ENCODE measurements at regions of chr3 and their contacts with region 1.

Region 1: DNA sequence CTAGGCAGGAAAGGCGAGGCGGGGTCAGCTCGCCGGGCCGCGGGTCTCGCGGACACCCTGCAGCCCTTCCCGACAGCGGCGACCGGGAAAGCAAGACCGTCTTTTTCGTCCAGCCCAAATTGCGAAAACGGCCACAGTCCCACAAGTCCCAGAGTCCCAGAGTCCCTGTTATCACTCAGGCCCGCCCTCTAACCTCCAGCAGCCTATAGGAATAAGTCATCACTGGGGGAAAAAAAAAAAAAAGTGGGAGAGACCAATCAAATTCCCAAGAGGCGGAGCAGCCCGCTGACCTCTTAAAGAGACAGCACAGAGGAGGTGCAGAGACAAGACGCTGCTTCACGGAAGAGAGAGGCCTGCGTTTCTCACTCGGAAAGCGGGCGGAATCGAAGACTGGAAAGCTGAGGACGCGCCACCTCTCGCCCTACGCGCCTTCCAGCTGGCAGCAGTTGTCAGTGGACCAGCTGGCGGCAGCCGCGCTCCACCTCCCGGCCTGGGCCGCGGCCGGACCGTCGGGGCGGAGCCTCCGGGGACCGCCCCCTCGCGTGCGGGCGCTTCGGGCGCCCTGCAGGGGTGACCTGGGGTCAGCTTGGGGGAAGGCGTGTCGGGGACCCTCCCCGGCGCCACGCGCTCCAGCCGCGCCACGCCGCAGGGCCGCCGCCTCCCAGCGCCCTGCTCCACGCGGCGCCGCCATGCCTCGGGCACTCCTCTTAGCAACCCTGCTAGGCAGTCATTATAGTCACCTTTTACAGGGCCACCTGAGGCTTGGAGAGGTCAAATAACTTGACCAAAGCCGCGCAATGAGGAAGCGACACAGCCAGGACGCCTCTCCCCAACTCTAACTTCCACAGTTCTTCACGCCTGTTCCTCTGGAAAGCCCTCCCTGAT is at the start of gene TPRA1:
- DNase-seq: peak; percentile 88
- ATAC-seq: peak; percentile 86
- H3K4me3 Mint-ChIP-seq: peak within 1 kb of the TSS; percentile 84
- H3K27ac Mint-ChIP-seq: peak within 1 kb of the TSS; percentile 96
- H3K4me1 Mint-ChIP-seq: peaks cover 25% of the 10 kb centered on the region
- H3K27me3 Mint-ChIP-seq: no peaks in the 10 kb centered on the region
- total RNA-seq, gene TPRA1: 22.5 to 24.8 TPM

Region 2: GRCh38 chr3:126703512-126704462 is 887.0 kb before region 1 on chr3 and contains the start of gene CHCHD6:
- CTCF ChIA-PET with region 1: no interaction called
- POLR2A ChIA-PET with region 1: no interaction called
- intact Hi-C with region 1: loop called in 1 of 2 experiments (anchors 2 kb)
- DNase-seq: peak; percentile 98
- ATAC-seq: peak; percentile 99
- H3K4me3 Mint-ChIP-seq: peak within 1 kb of the TSS; percentile 92
- H3K27ac Mint-ChIP-seq: peak within 1 kb of the TSS; percentile 82
- H3K4me1 Mint-ChIP-seq: peaks cover 23% of the 10 kb centered on the region
- H3K27me3 Mint-ChIP-seq: peaks cover 9% of the 10 kb centered on the region
- total RNA-seq, gene CHCHD6: 17.1 to 17.7 TPM

Region 3: DNA sequence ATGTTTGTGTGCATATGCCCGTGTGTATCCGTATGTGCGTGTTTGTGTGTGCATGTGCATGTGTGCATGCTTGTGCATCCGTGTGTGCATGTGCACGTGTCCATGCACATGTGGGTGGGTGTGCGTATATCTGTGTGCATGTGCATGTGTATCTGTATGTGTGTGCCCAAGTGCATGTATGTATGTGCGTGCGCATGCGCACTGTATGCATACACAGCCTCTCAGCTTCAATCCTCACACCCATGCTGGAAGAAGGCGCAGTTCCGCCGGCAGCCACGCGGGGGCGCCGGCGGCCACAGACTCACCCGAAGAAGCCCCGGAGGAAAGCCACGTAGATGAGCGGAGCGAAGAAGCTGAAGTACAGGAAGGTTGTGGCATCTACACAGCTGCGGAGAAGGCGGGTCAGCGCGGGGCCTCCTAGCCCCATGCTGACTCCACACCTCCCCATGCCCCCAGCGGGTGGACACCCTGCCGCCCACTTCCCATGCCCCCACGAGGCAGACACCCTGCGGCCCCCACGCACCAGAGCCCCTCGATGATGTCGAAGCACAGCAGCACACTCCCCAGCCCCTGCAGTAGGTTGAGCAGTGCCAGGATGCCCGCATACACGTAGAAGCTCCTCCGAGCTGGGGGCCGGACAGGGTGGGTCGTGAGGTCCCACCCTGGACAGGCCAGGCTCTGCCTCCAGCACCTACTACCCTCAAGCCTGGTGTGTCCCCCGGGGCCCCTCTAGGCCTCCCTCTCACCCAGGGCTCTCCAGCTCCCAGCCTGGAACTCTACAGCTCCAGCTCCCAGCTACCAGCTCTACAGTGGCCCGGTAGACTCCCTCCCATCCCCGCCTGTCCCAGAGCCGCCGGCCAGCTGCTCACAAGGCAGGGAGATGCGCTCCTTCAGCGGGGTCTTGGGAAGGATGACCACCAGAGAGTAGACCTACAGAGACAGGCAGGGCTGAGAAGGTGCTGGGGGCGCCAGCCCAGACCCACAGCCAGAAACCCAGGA is 15.7 kb before region 1 on chr3:
- CTCF ChIA-PET with region 1: interaction called, 10 read pairs
- POLR2A ChIA-PET with region 1: interaction called, 4 read pairs
- intact Hi-C with region 1: loop called (anchors 1 kb)
- DNase-seq: peak; percentile 90
- ATAC-seq: peak; percentile 97
- H3K4me3 Mint-ChIP-seq: no peak overlapping the region
- H3K27ac Mint-ChIP-seq: peak overlapping the region; percentile 34
- H3K4me1 Mint-ChIP-seq: peaks cover 8% of the 10 kb centered on the region
- H3K27me3 Mint-ChIP-seq: no peaks in the 10 kb centered on the region

Region 4: GRCh38 chr3:127628788-127629466 is 38.1 kb after region 1 on chr3 and contains the start of gene PODXL2:
- CTCF ChIA-PET with region 1: no interaction called
- POLR2A ChIA-PET with region 1: no interaction called
- intact Hi-C with region 1: loop called (anchors 2 to 5 kb)
- DNase-seq: peak; percentile 53
- ATAC-seq: peak; percentile 61
- H3K4me3 Mint-ChIP-seq: peak within 1 kb of the TSS; percentile 66
- H3K27ac Mint-ChIP-seq: peak within 1 kb of the TSS; percentile 58
- H3K4me1 Mint-ChIP-seq: peaks cover 28% of the 10 kb centered on the region
- H3K27me3 Mint-ChIP-seq: peaks cover 24% of the 10 kb centered on the region
- total RNA-seq, gene PODXL2: 1.9 TPM

Region 5: DNA sequence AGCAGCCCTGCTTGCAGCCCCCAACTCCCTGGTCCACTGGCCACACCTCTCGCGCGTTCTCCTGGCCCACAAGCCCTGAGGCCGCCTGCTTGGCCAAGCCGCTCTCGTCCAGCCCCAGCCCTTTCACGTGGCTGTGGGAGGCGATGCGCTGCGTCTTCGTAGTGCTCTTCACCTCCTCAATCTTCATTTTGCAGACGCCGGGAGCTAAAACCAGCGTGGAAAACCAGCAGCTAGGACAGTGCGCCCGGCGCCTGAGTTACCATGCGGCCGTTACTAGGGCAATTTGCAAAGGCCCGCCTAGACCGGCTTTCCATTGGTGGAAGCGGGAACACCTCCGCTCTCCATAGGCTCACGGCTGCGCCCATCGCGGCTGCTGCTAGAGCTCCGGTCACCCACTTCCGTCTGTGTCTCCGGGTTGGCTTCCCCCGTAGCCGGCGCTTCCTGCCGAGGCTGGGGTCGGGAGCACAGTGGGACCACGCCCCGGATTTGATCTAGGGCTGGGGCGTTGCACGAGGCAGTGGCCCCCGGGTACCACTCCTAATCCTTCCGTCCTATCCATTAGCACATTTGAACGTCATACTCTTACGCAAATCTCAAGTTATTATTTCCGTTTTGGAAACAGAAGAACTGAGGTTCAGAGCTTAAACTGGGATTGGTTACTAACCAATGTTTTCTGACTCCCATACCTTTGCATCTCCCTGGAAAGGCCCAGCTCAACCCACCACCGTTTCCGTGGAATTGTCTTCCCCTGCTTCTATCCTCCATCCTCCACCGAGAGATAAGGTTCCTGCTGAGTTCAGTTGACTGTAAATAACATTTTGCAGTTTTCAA is 532.9 kb after region 1 on chr3 and contains the start of gene RUVBL1:
- CTCF ChIA-PET with region 1: no interaction called
- POLR2A ChIA-PET with region 1: no interaction called
- intact Hi-C with region 1: loop called in 1 of 2 experiments (anchors 2 kb)
- DNase-seq: peak; percentile 99
- ATAC-seq: peak; percentile 99
- H3K4me3 Mint-ChIP-seq: peak within 1 kb of the TSS; percentile 99
- H3K27ac Mint-ChIP-seq: peak within 1 kb of the TSS; percentile 96
- H3K4me1 Mint-ChIP-seq: peaks cover 30% of the 10 kb centered on the region
- H3K27me3 Mint-ChIP-seq: no peaks in the 10 kb centered on the region
- total RNA-seq, gene RUVBL1: 97.0 to 99.9 TPM

Region 6: DNA sequence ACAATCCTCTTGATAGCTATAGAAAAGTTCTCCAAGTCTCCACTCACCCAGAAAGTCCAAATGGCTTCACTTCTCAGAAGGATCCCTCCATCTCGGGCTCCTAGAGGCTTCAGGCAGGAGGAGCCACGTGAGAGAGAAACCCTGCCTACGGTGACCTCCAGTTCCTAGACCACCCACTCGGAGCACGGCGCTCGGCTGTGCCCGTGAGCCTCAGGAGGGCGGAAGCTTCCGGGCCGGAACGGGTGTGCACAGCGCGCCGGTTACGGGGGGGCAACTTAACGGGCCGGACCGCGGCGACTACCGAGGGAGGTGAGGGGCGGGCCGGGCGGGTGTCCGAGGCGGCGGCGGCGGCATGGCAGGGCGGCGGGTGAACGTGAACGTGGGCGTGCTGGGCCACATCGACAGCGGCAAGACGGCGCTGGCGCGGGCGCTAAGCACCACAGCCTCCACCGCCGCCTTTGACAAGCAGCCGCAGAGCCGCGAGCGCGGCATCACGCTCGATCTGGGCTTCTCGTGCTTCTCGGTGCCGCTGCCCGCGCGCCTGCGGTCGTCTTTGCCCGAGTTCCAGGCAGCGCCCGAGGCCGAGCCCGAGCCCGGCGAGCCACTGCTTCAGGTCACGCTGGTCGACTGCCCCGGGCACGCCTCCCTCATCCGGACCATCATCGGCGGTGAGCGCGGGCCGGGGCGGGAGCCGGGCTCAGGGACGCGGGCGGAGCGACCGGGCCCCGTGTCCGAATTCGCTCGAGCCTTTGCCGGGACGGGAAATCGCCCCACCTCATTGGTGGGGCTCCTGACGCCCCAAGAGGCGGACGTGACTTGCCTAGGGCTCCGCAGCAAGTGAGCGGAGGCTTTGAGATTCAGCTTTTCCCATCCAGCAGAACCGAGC is 562.6 kb after region 1 on chr3 and contains the start of gene EEFSEC:
- CTCF ChIA-PET with region 1: no interaction called
- POLR2A ChIA-PET with region 1: no interaction called
- intact Hi-C with region 1: loop called in 1 of 2 experiments (anchors 1 kb)
- DNase-seq: peak; percentile 91
- ATAC-seq: peak; percentile 95
- H3K4me3 Mint-ChIP-seq: peak within 1 kb of the TSS; percentile 80
- H3K27ac Mint-ChIP-seq: peak within 1 kb of the TSS; percentile 85
- H3K4me1 Mint-ChIP-seq: peaks cover 25% of the 10 kb centered on the region
- H3K27me3 Mint-ChIP-seq: no peaks in the 10 kb centered on the region
- total RNA-seq, gene EEFSEC: 19.6 to 20.7 TPM

Region 7: DNA sequence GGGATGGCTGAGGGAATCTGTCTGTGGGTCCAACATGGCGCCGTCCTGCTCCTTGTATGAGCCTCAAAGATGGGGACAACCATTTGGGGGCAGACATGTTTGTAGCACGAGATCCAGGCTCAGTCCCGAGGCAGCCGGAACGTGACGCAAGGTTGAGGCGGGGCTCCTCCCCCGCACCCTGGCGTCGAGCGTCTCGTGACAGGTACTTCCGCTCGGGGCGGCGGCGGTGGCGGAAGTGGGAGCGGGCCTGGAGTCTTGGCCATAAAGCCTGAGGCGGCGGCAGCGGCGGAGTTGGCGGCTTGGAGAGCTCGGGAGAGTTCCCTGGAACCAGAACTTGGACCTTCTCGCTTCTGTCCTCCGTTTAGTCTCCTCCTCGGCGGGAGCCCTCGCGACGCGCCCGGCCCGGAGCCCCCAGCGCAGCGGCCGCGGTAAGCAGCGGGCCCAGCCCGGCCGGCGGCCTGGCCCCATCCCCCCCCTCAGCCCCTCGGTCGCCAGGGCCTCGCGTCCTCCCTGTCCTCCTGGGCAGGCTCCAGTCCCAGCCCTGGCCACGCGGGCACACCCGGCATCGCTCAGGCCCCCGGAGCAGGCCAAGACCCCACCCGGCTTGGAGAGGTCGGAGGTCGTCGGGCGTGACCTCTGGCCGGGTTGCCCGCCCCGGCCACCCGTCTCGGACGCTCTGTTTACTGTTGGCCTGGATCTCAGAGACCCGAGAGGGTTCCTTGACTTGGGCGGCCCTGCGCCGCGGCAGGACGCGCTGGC is 1135.3 kb after region 1 on chr3 and contains the start of gene RAB7A:
- CTCF ChIA-PET with region 1: no interaction called
- POLR2A ChIA-PET with region 1: no interaction called
- intact Hi-C with region 1: loop called in 1 of 2 experiments (anchors 10 kb)
- DNase-seq: peak; percentile 99
- ATAC-seq: peak; percentile 92
- H3K4me3 Mint-ChIP-seq: peak within 1 kb of the TSS; percentile 89
- H3K27ac Mint-ChIP-seq: peak within 1 kb of the TSS; percentile 92
- H3K4me1 Mint-ChIP-seq: peaks cover 52% of the 10 kb centered on the region
- H3K27me3 Mint-ChIP-seq: no peaks in the 10 kb centered on the region
- total RNA-seq, gene RAB7A: 297 to 534 TPM

Measured in activated CD4-positive, alpha-beta T cell treated with anti-CD3 and anti-CD28 coated beads for 36 hours (primary cell).